ENCODE measurements at regions of chr1 and their contacts with region 1.

Region 1: GRCh38 chr1:25997828-25998761 is at the start of gene PAFAH2:
- DNase-seq: peak; percentile 96 to 99 (median 98)
- H3K4me3 ChIP-seq: peak within 1 kb of the TSS in 3 of 4 donors; percentile 2 to 69 (median 32)
- H3K27ac ChIP-seq: peak within 1 kb of the TSS; percentile 80 to 94 (median 90)
- H3K4me1 ChIP-seq: peaks cover 11 to 19% of the 10 kb centered on the region in 2 donors
- H3K27me3 ChIP-seq: no peaks in the 10 kb centered on the region
- CTCF ChIP-seq: peak; percentile 87 to 100 (median 100)
- POLR2A ChIP-seq: peak in 1 of 2 donors; percentile 63
- total RNA-seq, gene PAFAH2: 6.6 to 32.8 (median 14.9) TPM

Region 2: DNA sequence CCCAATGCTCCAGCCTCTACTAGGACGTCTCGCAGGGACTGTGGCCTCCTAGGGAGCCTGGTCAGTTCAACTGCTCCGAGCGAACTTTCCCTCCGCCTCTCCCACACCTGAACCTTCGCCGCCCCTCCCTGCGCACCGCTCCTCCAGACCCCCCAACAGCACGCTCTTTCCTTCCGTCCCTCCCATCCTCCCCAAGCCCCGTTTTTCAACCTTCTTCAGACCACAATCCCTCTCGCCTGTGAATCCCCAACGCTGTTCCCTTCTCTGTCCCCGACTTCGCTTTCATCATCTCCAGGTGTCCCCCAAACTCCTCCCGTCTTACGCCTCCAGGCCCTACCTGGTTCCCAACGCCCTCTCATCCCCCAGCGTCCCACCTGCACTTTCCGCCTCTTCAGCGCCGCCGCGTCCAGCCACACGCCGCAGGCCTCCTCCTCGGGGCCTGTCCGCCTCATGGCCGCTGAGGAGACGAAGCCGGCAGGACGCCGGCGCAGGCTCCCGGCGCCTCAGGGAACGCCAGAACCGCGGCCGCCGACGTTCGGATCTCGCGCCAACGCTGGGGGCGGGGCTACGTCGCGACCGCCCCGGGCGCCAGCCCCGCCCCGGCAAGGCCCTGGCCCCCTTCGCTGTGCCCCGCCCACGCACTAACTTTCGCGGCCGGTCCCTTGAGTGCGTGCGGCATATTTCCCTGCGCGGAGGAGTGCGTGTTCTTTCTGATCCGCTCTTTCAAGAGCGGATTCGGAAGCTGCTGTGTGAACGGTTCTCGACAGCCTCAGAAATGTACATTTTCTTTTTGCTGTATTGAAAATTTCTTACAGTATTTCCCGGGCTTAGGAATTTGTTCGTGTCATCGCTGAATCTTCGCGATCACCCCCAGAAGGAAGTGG is 138.9 kb before region 1 on chr1 and contains the start of gene AUNIP:
- intact Hi-C with region 1: no loop called
- DNase-seq: peak; percentile 84 to 91 (median 89)
- H3K4me3 ChIP-seq: peak within 1 kb of the TSS in 3 of 4 donors; percentile 1 to 56 (median 38)
- H3K27ac ChIP-seq: peak within 1 kb of the TSS; percentile 66 to 86 (median 84)
- H3K4me1 ChIP-seq: peaks cover 6 to 26% of the 10 kb centered on the region in 2 donors
- H3K27me3 ChIP-seq: no peaks in the 10 kb centered on the region
- CTCF ChIP-seq: no peak
- POLR2A ChIP-seq: peak; percentile 41 to 88
- total RNA-seq, gene AUNIP: 0.24 to 3.4 (median 0.83) TPM

Region 3: GRCh38 chr1:25895365-25895993 is 102.6 kb before region 1 on chr1:
- intact Hi-C with region 1: loop called (anchors 2 to 5 kb)
- DNase-seq: peak; percentile 86 to 96 (median 91)
- H3K4me3 ChIP-seq: no peak overlapping the region
- H3K27ac ChIP-seq: no peak overlapping the region
- H3K4me1 ChIP-seq: peaks cover 0 to 11% of the 10 kb centered on the region in 2 donors
- H3K27me3 ChIP-seq: no peaks in the 10 kb centered on the region
- CTCF ChIP-seq: peak; percentile 96 to 100 (median 99)
- POLR2A ChIP-seq: no peak

Measured in adrenal gland (tissue), 19 donors.